ENCODE measurements at regions of chr19 and their contacts with region 1.

Region 1: GRCh38 chr19:38634757-38635482 is 12.5 kb upstream of the ACTN4 start:
- DNase-seq: peak; percentile 64
- H3K4me3 ChIP-seq: no peak overlapping the region
- H3K27ac ChIP-seq: no peak overlapping the region
- H3K4me1 ChIP-seq: no peaks in the 10 kb centered on the region
- H3K27me3 ChIP-seq: no peaks in the 10 kb centered on the region
- CTCF ChIP-seq: peak; percentile 90 to 93
- POLR2A ChIP-seq: no peak

Region 2: DNA sequence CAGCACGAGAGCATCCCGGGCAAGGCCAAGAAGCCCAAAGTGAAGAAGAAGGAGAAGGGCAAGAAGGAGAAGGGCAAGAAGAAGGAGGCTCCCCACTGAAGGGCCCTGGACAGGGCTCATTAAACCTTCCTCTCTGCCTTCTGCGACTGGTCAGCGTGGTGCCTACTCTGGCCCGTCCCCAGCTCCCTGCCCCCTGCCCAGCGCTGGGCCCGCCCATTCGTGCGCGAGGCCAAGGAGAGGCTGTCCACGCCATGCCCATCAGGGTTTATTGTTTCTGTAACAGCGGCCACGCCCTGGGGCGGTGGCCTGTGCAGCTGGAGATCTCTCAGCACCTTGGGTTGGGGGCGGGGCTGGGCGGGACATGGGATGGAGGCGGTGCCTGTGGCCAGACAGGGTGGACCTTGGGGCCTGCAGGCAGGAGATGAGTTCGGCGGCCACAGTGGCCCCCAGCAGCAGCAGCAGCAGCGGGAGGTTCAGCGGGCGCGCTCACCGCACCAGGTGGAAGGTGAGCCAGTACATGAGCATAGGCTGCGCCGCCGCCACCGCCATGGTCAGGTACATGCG is 330.0 kb before region 1 on chr19:
- CTCF ChIA-PET with region 1: no interaction called
- POLR2A ChIA-PET with region 1: no interaction called
- dilution Hi-C with region 1: no loop called
- intact Hi-C with region 1: no loop called
- DNase-seq: peak; percentile 70
- H3K4me3 ChIP-seq: peak overlapping the region in 1 of 3 experiments; percentile 10
- H3K27ac ChIP-seq: no peak overlapping the region
- H3K4me1 ChIP-seq: peaks cover 16% of the 10 kb centered on the region
- H3K27me3 ChIP-seq: no peaks in the 10 kb centered on the region
- CTCF ChIP-seq: no peak
- POLR2A ChIP-seq: peak; percentile 46

Region 3: GRCh38 chr19:38402967-38403861 is 231.7 kb before region 1 on chr19 and contains the start of gene FAM98C:
- CTCF ChIA-PET with region 1: interaction called, 66 read pairs
- POLR2A ChIA-PET with region 1: no interaction called
- dilution Hi-C with region 1: no loop called
- intact Hi-C with region 1: loop called (anchors 1 kb)
- DNase-seq: peak; percentile 97
- H3K4me3 ChIP-seq: peak within 1 kb of the TSS; percentile 65 to 79 (median 73)
- H3K27ac ChIP-seq: peak within 1 kb of the TSS; percentile 28
- H3K4me1 ChIP-seq: peaks cover 2% of the 10 kb centered on the region
- H3K27me3 ChIP-seq: no peaks in the 10 kb centered on the region
- CTCF ChIP-seq: peak; percentile 89 to 95
- POLR2A ChIP-seq: peak; percentile 36
- total RNA-seq, gene FAM98C: 13.0 and 15.4 TPM in 2 replicates

Region 4: GRCh38 chr19:38544034-38544958 is 90.6 kb before region 1 on chr19:
- CTCF ChIA-PET with region 1: interaction called, 42 read pairs
- POLR2A ChIA-PET with region 1: interaction called, 7 read pairs
- dilution Hi-C with region 1: no loop called
- intact Hi-C with region 1: loop called (anchors 1 kb)
- DNase-seq: peak; percentile 78
- H3K4me3 ChIP-seq: no peak overlapping the region
- H3K27ac ChIP-seq: no peak overlapping the region
- H3K4me1 ChIP-seq: peaks cover 7% of the 10 kb centered on the region
- H3K27me3 ChIP-seq: peaks cover 0 to 2% of the 10 kb centered on the region in 2 experiments
- CTCF ChIP-seq: peak; percentile 30 to 37
- POLR2A ChIP-seq: no peak

Region 5: DNA sequence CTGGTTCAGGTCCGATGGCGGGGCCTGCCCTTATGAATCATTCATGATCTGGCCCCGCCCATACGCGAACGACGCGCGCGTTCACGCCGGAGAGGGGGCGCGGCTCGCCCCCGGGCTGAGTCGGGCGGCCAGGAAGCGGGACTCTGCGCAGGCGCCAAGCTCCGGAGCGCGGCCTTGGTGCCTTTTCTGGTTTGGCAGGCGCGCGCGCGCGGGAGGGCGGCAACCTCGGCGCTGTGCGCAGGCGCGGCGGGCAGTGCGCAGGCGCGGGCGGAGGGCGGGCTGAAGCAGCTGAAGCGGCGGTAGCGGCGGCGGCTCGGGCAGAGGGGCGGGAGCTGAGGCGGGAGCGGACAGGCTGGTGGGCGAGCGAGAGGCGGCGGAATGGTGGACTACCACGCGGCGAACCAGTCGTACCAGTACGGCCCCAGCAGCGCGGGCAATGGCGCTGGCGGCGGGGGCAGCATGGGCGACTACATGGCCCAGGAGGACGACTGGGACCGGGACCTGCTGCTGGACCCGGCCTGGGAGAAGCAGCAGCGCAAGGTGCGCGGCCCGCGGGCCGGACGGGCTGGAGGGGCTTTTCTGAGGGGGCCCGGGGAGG is 12.5 kb after region 1 on chr19 and contains the start of gene ACTN4:
- CTCF ChIA-PET with region 1: interaction called, 57 read pairs
- POLR2A ChIA-PET with region 1: no interaction called
- dilution Hi-C with region 1: no loop called
- intact Hi-C with region 1: no loop called
- DNase-seq: peak; percentile 98
- H3K4me3 ChIP-seq: peak within 1 kb of the TSS; percentile 96 to 99 (median 98)
- H3K27ac ChIP-seq: peak within 1 kb of the TSS; percentile 70
- H3K4me1 ChIP-seq: peaks cover 28% of the 10 kb centered on the region
- H3K27me3 ChIP-seq: no peaks in the 10 kb centered on the region
- CTCF ChIP-seq: no peak
- POLR2A ChIP-seq: peak; percentile 97
- total RNA-seq, gene ACTN4: 693 and 748 TPM in 2 replicates

Region 6: DNA sequence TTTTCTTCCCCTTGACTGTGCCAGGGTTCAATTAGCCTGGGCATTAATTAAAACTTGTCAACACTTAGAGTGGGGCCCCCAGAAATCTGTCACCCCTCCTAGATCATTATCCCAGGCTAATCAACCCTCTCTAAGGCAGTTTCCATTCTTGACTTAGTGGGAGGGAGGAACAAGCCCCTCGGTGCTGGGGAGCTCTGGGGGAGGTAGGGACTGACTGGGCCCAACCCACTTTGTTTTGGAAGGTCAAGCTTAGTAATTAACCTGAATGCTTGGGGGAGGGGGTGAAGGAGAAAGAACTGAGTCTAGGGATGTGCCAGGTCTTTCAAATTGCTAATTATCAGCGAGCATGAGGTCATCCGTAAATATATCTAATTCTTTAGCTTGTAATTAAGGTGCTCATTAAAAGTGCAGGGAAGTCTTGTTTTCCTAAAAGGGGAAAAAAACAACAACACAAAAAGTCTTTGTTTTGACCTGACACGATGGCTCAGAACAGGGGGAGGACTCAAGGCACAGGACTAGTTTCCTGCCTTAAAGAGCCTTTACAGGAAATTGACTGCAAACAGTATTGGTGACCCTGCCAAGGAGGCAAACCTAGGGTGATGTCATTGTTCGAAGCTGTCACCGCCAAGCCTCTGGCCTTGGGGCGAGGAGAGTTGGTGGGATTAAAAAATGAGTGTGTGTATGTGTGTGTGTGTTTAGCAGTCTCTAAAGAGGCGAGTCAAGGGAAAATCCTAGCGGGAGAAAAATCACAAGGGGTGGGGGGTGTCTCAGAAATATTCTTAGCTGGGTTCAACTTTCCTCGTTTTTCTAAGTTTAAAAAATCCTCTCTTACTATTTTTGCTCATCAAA is 32.0 kb after region 1 on chr19:
- CTCF ChIA-PET with region 1: interaction called, 13 read pairs
- POLR2A ChIA-PET with region 1: no interaction called
- dilution Hi-C with region 1: no loop called
- intact Hi-C with region 1: no loop called
- DNase-seq: peak; percentile 90
- H3K4me3 ChIP-seq: peak overlapping the region in 1 of 3 experiments; percentile 5
- H3K27ac ChIP-seq: peak overlapping the region; percentile 95
- H3K4me1 ChIP-seq: peaks cover 82% of the 10 kb centered on the region
- H3K27me3 ChIP-seq: no peaks in the 10 kb centered on the region
- CTCF ChIP-seq: no peak
- POLR2A ChIP-seq: peak; percentile 12

Region 7: GRCh38 chr19:38701455-38702063 is 66.6 kb after region 1 on chr19:
- CTCF ChIA-PET with region 1: interaction called, 10 read pairs
- POLR2A ChIA-PET with region 1: no interaction called
- dilution Hi-C with region 1: no loop called
- intact Hi-C with region 1: no loop called
- DNase-seq: no peak
- H3K4me3 ChIP-seq: no peak overlapping the region
- H3K27ac ChIP-seq: no peak overlapping the region
- H3K4me1 ChIP-seq: peaks cover 9% of the 10 kb centered on the region
- H3K27me3 ChIP-seq: no peaks in the 10 kb centered on the region
- CTCF ChIP-seq: no peak
- POLR2A ChIP-seq: no peak

Region 8: GRCh38 chr19:38929929-38930775 is 295.2 kb after region 1 on chr19 and contains the start of gene SARS2:
- CTCF ChIA-PET with region 1: interaction called, 13 read pairs
- POLR2A ChIA-PET with region 1: no interaction called
- dilution Hi-C with region 1: no loop called
- intact Hi-C with region 1: loop called (anchors 2 kb)
- DNase-seq: peak; percentile 95
- H3K4me3 ChIP-seq: peak within 1 kb of the TSS; percentile 50 to 78 (median 58)
- H3K27ac ChIP-seq: peak within 1 kb of the TSS; percentile 69
- H3K4me1 ChIP-seq: peaks cover 14% of the 10 kb centered on the region
- H3K27me3 ChIP-seq: no peaks in the 10 kb centered on the region
- CTCF ChIP-seq: peak; percentile 99 to 100
- POLR2A ChIP-seq: peak; percentile 85
- total RNA-seq, gene SARS2: 38.5 and 40.3 TPM in 2 replicates

Measured in endothelial cell of umbilical vein (primary cell).